ENCODE measurements at regions of chr1 and their contacts with region 1.

Region 1: GRCh38 chr1:181014477-181015250 is 8.0 kb downstream of the STX6 start:
- DNase-seq: peak; percentile 54
- ATAC-seq: peak; percentile 78
- H3K4me3 Mint-ChIP-seq: no peak overlapping the region
- H3K27ac Mint-ChIP-seq: no peak overlapping the region
- H3K4me1 Mint-ChIP-seq: peaks cover 46% of the 10 kb centered on the region
- H3K27me3 Mint-ChIP-seq: no peaks in the 10 kb centered on the region

Region 2: DNA sequence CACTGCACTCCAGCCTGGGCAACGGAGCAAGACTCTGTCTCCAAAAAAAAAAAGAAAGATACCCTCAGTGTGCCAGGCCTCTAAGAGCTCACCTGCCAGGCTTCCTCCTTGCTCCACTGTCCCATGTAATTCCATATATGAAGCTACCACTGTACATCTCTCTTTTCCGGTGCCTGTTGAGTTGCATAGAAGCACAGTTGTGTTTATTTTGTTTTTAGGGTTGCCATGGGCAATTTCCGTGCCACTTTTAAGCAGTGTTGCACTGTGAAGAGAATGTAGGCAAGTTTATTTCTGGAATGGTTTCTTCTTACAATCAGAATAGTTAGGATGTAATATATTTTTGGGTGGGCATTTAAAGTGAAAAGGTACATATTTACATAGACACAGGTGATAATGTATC is 42.4 kb after region 1 on chr1:
- CTCF ChIA-PET with region 1: no interaction called
- POLR2A ChIA-PET with region 1: no interaction called
- intact Hi-C with region 1: no loop called
- DNase-seq: no peak
- ATAC-seq: no peak
- H3K4me3 Mint-ChIP-seq: no peak overlapping the region
- H3K27ac Mint-ChIP-seq: no peak overlapping the region
- H3K4me1 Mint-ChIP-seq: peaks cover 7% of the 10 kb centered on the region
- H3K27me3 Mint-ChIP-seq: no peaks in the 10 kb centered on the region

Region 3: GRCh38 chr1:181079382-181079781 is 64.7 kb after region 1 on chr1:
- CTCF ChIA-PET with region 1: interaction called, 3 read pairs
- POLR2A ChIA-PET with region 1: no interaction called
- intact Hi-C with region 1: loop called in 1 of 2 experiments (anchors 1 kb)
- DNase-seq: no peak
- ATAC-seq: peak; percentile 45
- H3K4me3 Mint-ChIP-seq: no peak overlapping the region
- H3K27ac Mint-ChIP-seq: peak overlapping the region; percentile 3
- H3K4me1 Mint-ChIP-seq: peaks cover 10% of the 10 kb centered on the region
- H3K27me3 Mint-ChIP-seq: peaks cover 19% of the 10 kb centered on the region

Region 4: GRCh38 chr1:181099152-181100014 is 84.7 kb after region 1 on chr1:
- CTCF ChIA-PET with region 1: no interaction called
- POLR2A ChIA-PET with region 1: no interaction called
- intact Hi-C with region 1: loop called (anchors 1 kb)
- DNase-seq: peak; percentile 73
- ATAC-seq: peak; percentile 87
- H3K4me3 Mint-ChIP-seq: peak overlapping the region; percentile 56
- H3K27ac Mint-ChIP-seq: peak overlapping the region; percentile 94
- H3K4me1 Mint-ChIP-seq: peaks cover 77% of the 10 kb centered on the region
- H3K27me3 Mint-ChIP-seq: no peaks in the 10 kb centered on the region